ENCODE measurements at regions of chr7 and their contacts with region 1.

Region 1: GRCh38 chr7:38369816-38370493 is 96.5 kb upstream of the TARP start:
- DNase-seq: peak; percentile 40
- H3K4me3 ChIP-seq: no peak overlapping the region
- CTCF ChIP-seq: peak; percentile 89

Region 2: GRCh38 chr7:38107486-38107893 is 262.5 kb before region 1 on chr7:
- CTCF ChIA-PET with region 1: interaction called, 34 read pairs
- POLR2A ChIA-PET with region 1: no interaction called
- DNase-seq: no peak
- H3K4me3 ChIP-seq: no peak overlapping the region
- CTCF ChIP-seq: peak; percentile 67

Region 3: DNA sequence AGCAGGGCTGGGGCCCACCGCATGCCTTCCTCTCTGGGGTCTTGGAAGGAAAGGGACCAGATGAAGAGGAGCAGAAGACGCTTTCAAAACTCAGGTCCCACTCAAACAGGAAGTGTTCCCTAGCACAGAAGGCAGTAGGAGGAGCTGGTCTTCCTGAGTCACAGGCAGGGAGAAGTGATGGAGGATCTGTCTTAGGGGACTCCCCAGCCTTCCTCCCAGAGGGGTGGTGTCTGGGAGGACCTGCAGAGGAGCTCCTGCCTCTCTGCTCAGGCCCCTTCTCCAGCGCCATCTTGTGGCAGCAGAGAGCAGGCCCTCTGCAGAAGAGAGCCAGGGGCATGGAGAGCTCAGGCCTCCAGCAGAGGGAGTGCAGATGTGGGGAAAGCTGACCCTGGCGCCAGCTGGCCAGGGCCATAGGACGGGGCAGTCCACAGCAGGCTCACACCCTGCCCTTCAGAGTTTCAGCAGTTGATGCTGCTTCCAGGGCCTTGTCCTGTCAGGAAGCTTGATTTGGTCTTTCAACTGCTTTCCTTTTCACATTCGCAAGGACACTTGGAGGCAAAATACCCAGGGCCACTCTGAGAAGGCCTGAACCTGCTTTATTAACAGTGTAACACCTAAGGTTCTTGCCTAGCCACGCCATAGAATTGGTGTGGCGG is 34.3 kb before region 1 on chr7:
- CTCF ChIA-PET with region 1: interaction called, 27 read pairs
- POLR2A ChIA-PET with region 1: no interaction called
- DNase-seq: peak; percentile 80
- H3K4me3 ChIP-seq: peak overlapping the region; percentile 32
- CTCF ChIP-seq: peak; percentile 100

Region 4: DNA sequence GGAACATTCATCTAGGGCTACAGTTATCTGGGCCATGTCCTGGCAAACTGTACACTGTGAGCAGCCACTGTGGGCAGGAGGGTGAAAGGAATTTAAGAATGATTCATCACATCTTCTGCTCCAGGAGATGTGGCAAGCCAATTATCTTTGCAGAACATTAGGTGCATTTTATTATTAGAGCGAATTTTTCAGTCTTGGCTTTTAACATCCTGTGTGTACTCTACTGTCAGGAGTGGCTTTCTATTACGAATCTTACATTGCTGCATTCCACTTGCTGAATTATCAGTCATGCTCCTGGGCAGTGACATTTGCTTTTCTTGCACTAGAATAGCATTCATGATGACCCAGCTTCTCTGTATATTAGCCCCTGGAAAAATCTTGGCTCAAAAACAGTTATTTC is 12.7 kb after region 1 on chr7:
- CTCF ChIA-PET with region 1: interaction called, 226 read pairs
- POLR2A ChIA-PET with region 1: no interaction called
- DNase-seq: peak; percentile 57
- H3K4me3 ChIP-seq: no peak overlapping the region
- CTCF ChIP-seq: no peak

Region 5: GRCh38 chr7:38398725-38399321 is 28.9 kb after region 1 on chr7:
- CTCF ChIA-PET with region 1: interaction called, 20 read pairs
- POLR2A ChIA-PET with region 1: no interaction called
- DNase-seq: no peak
- H3K4me3 ChIP-seq: no peak overlapping the region
- CTCF ChIP-seq: peak; percentile 75